ENCODE measurements at regions of chr16 and their contacts with region 1.

Region 1: DNA sequence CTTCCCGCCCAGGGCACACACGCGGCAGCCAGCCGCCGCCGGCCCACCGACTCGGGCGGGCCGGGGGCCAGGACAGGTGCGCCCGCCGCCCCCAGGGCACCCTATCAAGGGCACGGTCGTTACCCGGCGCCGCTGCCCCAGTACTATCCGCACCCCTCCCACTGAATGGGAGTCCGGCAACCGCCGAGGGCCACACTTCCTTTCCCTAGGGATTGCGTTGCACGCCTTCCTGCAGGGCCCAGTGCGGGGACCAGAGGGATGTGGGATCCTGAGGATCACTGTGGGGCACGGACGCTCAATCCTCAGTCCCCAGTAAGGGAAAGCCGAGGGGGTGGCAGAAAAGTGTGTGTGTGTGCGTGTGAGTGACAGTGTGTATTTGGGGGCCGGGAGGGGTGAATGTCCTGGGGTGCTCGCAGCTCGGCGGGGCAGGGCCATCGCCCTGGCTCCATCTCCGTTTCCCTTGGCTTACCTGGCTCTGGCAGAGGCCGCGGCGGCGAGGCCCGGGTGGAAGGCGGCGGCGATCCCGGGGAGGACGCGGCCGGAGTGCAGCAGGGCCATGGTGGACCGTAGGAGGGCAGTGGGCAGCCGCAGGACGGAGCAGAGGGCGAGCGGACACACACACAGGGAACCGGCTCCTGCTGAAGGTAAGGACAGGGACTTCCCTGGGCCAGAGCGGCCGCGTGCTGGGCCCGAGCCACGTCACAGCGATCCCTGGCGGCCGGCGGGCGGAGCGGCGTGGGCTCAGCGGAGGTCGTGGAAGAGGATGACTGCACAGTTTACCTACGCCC is at the start of gene GOT2:
- DNase-seq: peak; percentile 84
- ATAC-seq: peak; percentile 97
- H3K4me3 ChIP-seq: peak within 1 kb of the TSS; percentile 73 to 94 (median 94)
- H3K27ac ChIP-seq: peak within 1 kb of the TSS; percentile 69
- H3K4me1 ChIP-seq: peaks cover 42% of the 10 kb centered on the region
- H3K27me3 ChIP-seq: no peaks in the 10 kb centered on the region; a peak in 1 of 5 replicates
- CTCF ChIP-seq: peak; percentile 100
- EP300 ChIP-seq: peak in 1 of 2 experiments; percentile 11; a peak in 1 of 4 replicates
- POLR2A ChIP-seq: peak; percentile 76 to 92
- RAD21 ChIP-seq: peak; percentile 88
- total RNA-seq, gene GOT2: 121 and 160 TPM in 2 replicates

Region 2: GRCh38 chr16:58494981-58495520 is 238.8 kb before region 1 on chr16:
- CTCF ChIA-PET with region 1: no interaction called
- POLR2A ChIA-PET with region 1: no interaction called
- in situ Hi-C with region 1: loop called (anchors 10 kb)
- intact Hi-C with region 1: no loop called
- DNase-seq: peak; percentile 96
- ATAC-seq: peak; percentile 72
- H3K4me3 ChIP-seq: no peak overlapping the region
- H3K27ac ChIP-seq: no peak overlapping the region
- H3K4me1 ChIP-seq: peaks cover 16% of the 10 kb centered on the region
- H3K27me3 ChIP-seq: peaks cover 0 to 18% of the 10 kb centered on the region in 2 experiments; a peak in 2 of 5 replicates
- CTCF ChIP-seq: peak; percentile 60
- EP300 ChIP-seq: no peak
- POLR2A ChIP-seq: no peak
- RAD21 ChIP-seq: no peak

Region 3: GRCh38 chr16:58684354-58685083 is 49.3 kb before region 1 on chr16 and contains the start of gene SLC38A7:
- CTCF ChIA-PET with region 1: no interaction called
- POLR2A ChIA-PET with region 1: interaction called, 3 read pairs
- in situ Hi-C with region 1: loop called (anchors 5 kb)
- intact Hi-C with region 1: loop called (anchors 2 kb)
- DNase-seq: peak; percentile 83
- ATAC-seq: peak; percentile 97
- H3K4me3 ChIP-seq: peak within 1 kb of the TSS; percentile 81 to 91 (median 88)
- H3K27ac ChIP-seq: peak within 1 kb of the TSS; percentile 48
- H3K4me1 ChIP-seq: peaks cover 19% of the 10 kb centered on the region
- H3K27me3 ChIP-seq: no peaks in the 10 kb centered on the region; a peak in 1 of 5 replicates
- CTCF ChIP-seq: peak; percentile 13; the same call in 1 of the 2 replicates
- EP300 ChIP-seq: no peak
- POLR2A ChIP-seq: peak; percentile 66 to 81
- RAD21 ChIP-seq: no peak; the same call in 1 of the 2 replicates
- total RNA-seq, gene SLC38A7: 6.2 and 14.1 TPM in 2 replicates

Region 4: GRCh38 chr16:58716468-58716867 is 17.4 kb before region 1 on chr16:
- CTCF ChIA-PET with region 1: no interaction called
- POLR2A ChIA-PET with region 1: interaction called, 3 read pairs
- in situ Hi-C with region 1: no loop called
- intact Hi-C with region 1: loop called (anchors 1 kb)
- DNase-seq: no peak
- ATAC-seq: no peak
- H3K4me3 ChIP-seq: no peak overlapping the region
- H3K27ac ChIP-seq: no peak overlapping the region
- H3K4me1 ChIP-seq: peaks cover 14% of the 10 kb centered on the region
- H3K27me3 ChIP-seq: no peaks in the 10 kb centered on the region
- CTCF ChIP-seq: no peak
- EP300 ChIP-seq: no peak
- POLR2A ChIP-seq: no peak
- RAD21 ChIP-seq: no peak

Measured in HepG2 (cell line).